A673 (cell line): ENCODE measurements at regions of chr11 and their contacts with region 1.

Region 1: DNA sequence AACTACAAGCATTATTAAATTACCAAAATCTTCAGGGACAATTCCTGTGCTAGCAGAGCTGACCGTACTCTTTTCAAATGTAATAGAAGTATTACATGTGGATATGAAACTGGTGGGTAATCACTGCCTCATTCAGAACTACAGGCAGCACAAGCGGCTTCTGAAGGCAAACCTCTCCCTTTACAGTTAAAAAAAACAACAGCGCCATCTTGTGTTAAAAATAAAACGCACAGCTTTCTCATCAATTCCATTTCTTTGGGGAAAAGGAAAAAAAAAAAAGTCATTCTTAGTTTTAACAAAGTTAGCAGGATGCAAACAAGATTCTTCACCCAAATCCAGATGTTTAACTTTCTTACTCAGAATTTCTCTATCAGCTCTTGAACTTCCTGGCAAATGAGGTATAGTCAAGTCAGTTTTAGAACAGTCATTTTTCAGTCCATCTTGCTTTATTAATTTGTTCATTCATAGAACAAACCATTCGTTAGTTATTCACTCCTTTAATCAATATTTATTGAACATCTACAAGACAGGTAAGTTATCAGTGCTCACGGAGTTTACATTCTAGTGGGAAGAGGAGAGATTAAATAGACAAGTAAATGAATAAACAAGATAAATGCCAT is 331.8 kb upstream of the MPPED2 start:
- DNase-seq: peak; percentile 93
- H3K4me3 ChIP-seq: no peak overlapping the region
- H3K27ac ChIP-seq: no peak overlapping the region
- H3K4me1 ChIP-seq: no peaks in the 10 kb centered on the region
- H3K27me3 ChIP-seq: peaks cover 28% of the 10 kb centered on the region
- CTCF ChIP-seq: peak; percentile 99

Region 2: DNA sequence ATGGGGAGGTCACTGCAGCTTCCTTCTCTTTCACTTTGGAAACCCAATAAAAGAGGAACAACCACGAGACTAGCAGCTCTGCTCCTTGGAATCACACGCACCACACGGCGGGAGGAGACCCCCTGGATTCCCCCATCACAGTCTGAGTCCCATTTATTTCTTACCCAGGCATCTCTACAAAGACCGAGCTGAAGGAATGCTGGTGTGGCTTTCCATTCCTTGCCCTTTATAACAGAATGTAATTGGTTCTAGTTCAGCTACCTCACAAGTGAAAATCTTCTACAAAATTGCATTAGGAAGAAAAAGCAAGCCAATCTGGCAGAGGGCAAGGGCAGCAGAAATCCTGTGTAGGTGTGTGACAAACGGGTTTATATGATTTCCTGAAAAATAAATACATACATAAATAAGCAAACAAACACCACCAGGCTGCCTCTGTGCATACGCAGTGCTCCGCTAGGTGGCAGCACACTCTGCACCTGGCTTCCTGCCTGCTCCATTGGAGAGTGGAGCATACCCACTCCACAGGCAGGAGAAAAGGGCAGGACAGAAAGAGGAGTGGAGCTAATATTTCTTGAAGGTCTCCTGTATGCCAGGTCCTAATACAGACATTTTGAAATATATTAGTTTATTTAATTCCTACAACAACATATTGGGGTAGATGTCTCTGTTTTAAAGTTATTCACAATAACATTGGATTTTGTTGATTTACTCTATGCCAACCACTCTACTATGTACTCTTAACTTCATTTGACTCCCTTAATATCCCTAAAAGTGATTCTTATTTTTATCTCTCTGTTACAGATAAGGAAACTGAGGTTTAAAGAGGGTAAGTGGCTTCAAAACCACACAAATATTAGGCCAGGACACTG is 1574.3 kb before region 1 on chr11:
- CTCF ChIA-PET with region 1: no interaction called
- POLR2A ChIA-PET with region 1: no interaction called
- intact Hi-C with region 1: loop called (anchors 5 kb)
- DNase-seq: peak; percentile 89
- H3K4me3 ChIP-seq: peak overlapping the region; percentile 16
- H3K27ac ChIP-seq: no peak overlapping the region
- H3K4me1 ChIP-seq: no peaks in the 10 kb centered on the region
- H3K27me3 ChIP-seq: peaks cover 54% of the 10 kb centered on the region
- CTCF ChIP-seq: peak; percentile 100

Region 3: DNA sequence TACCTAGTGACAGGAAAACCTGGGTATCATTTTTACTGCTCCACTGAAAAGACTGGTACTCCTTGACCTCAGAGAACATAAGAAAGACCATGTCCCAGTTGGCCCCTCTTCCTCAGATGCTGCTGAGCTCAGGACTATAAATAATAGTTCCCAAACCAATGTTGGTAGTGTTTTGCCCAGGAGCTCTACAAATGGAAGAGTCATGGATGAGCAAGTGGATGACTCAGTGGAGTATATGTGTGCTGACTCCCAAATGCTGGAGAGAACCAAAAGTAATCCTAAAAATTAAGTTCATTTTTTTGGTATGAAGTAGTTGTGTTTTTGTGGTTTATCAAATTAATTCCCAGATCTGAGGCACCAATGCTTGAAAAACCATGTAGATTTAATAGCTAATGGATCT is 1383.1 kb before region 1 on chr11:
- CTCF ChIA-PET with region 1: no interaction called
- POLR2A ChIA-PET with region 1: no interaction called
- intact Hi-C with region 1: loop called (anchors 5 kb)
- DNase-seq: no peak
- H3K4me3 ChIP-seq: no peak overlapping the region
- H3K27ac ChIP-seq: no peak overlapping the region
- H3K4me1 ChIP-seq: no peaks in the 10 kb centered on the region
- H3K27me3 ChIP-seq: no peaks in the 10 kb centered on the region
- CTCF ChIP-seq: no peak

Region 4: GRCh38 chr11:30196400-30197206 is 721.4 kb before region 1 on chr11:
- CTCF ChIA-PET with region 1: no interaction called
- POLR2A ChIA-PET with region 1: no interaction called
- intact Hi-C with region 1: loop called (anchors 2 kb)
- DNase-seq: peak; percentile 85
- H3K4me3 ChIP-seq: no peak overlapping the region
- H3K27ac ChIP-seq: no peak overlapping the region
- H3K4me1 ChIP-seq: no peaks in the 10 kb centered on the region
- H3K27me3 ChIP-seq: no peaks in the 10 kb centered on the region
- CTCF ChIP-seq: peak; percentile 100

Region 5: GRCh38 chr11:30406978-30407762 is 510.8 kb before region 1 on chr11:
- CTCF ChIA-PET with region 1: interaction called, 13 read pairs
- POLR2A ChIA-PET with region 1: no interaction called
- intact Hi-C with region 1: no loop called
- DNase-seq: no peak
- H3K4me3 ChIP-seq: no peak overlapping the region
- H3K27ac ChIP-seq: no peak overlapping the region
- H3K4me1 ChIP-seq: no peaks in the 10 kb centered on the region
- H3K27me3 ChIP-seq: peaks cover 8% of the 10 kb centered on the region
- CTCF ChIP-seq: no peak

Region 6: DNA sequence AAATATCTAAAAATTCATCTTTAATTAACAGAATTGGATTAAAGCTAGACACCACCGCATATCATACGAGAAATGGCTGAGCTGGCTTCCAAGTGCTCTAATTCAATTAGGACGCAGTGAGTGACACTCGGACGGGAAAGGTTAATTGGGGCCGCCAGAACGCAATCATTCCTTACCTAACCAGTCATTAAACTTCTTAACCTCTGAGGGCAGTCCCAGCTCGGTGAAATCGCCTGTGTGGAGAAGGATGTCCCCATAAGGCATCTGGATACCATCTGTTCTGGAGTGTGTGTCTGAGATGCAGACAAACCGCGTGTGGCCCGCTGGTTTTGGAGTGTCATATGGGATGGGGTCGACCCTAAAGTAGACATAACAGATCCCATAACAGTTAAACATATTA is 382.2 kb before region 1 on chr11:
- CTCF ChIA-PET with region 1: no interaction called
- POLR2A ChIA-PET with region 1: no interaction called
- intact Hi-C with region 1: no loop called
- DNase-seq: no peak
- H3K4me3 ChIP-seq: no peak overlapping the region
- H3K27ac ChIP-seq: no peak overlapping the region
- H3K4me1 ChIP-seq: no peaks in the 10 kb centered on the region
- H3K27me3 ChIP-seq: peaks cover 6% of the 10 kb centered on the region
- CTCF ChIP-seq: no peak

Region 7: DNA sequence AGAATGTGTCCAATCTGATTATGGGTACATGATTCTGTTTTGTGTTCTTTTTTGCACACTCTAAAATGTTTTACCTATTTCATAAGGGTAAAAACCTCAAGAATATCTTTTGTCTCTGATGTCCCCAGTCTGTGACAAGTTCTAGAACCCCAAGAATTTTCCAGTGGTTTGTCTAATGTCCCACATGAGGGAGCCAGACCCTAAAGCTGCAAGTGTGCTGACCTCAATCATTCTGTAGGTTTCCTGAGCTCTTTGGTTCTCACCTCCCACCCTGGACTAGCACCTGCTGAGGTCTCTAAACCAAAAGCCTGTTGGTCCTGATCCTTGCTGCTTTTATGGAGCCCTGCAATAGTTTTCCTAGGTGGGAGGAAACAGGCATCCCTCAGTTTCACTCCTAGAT is 182.0 kb before region 1 on chr11:
- CTCF ChIA-PET with region 1: interaction called, 13 read pairs
- POLR2A ChIA-PET with region 1: no interaction called
- intact Hi-C with region 1: loop called (anchors 1 kb)
- DNase-seq: peak; percentile 55
- H3K4me3 ChIP-seq: no peak overlapping the region
- H3K27ac ChIP-seq: no peak overlapping the region
- H3K4me1 ChIP-seq: no peaks in the 10 kb centered on the region
- H3K27me3 ChIP-seq: no peaks in the 10 kb centered on the region
- CTCF ChIP-seq: peak; percentile 53

Region 8: GRCh38 chr11:30863209-30863608 is 54.8 kb before region 1 on chr11:
- CTCF ChIA-PET with region 1: no interaction called
- POLR2A ChIA-PET with region 1: no interaction called
- intact Hi-C with region 1: no loop called
- DNase-seq: no peak
- H3K4me3 ChIP-seq: no peak overlapping the region
- H3K27ac ChIP-seq: no peak overlapping the region
- H3K4me1 ChIP-seq: peaks cover 23% of the 10 kb centered on the region
- H3K27me3 ChIP-seq: no peaks in the 10 kb centered on the region
- CTCF ChIP-seq: no peak

Region 9: GRCh38 chr11:31001427-31001826 is 83.5 kb after region 1 on chr11:
- CTCF ChIA-PET with region 1: no interaction called
- POLR2A ChIA-PET with region 1: no interaction called
- intact Hi-C with region 1: no loop called
- DNase-seq: no peak
- H3K4me3 ChIP-seq: no peak overlapping the region
- H3K27ac ChIP-seq: no peak overlapping the region
- H3K4me1 ChIP-seq: no peaks in the 10 kb centered on the region
- H3K27me3 ChIP-seq: peaks cover 39% of the 10 kb centered on the region
- CTCF ChIP-seq: no peak

Region 10: GRCh38 chr11:31355131-31355530 is 437.2 kb after region 1 on chr11:
- CTCF ChIA-PET with region 1: no interaction called
- POLR2A ChIA-PET with region 1: no interaction called
- intact Hi-C with region 1: no loop called
- DNase-seq: no peak
- H3K4me3 ChIP-seq: no peak overlapping the region
- H3K27ac ChIP-seq: no peak overlapping the region
- H3K4me1 ChIP-seq: no peaks in the 10 kb centered on the region
- H3K27me3 ChIP-seq: peaks cover 58% of the 10 kb centered on the region
- CTCF ChIP-seq: no peak